GM10248 (cell line): ENCODE measurements at regions of chr7 and their contacts with region 1.

Region 1: DNA sequence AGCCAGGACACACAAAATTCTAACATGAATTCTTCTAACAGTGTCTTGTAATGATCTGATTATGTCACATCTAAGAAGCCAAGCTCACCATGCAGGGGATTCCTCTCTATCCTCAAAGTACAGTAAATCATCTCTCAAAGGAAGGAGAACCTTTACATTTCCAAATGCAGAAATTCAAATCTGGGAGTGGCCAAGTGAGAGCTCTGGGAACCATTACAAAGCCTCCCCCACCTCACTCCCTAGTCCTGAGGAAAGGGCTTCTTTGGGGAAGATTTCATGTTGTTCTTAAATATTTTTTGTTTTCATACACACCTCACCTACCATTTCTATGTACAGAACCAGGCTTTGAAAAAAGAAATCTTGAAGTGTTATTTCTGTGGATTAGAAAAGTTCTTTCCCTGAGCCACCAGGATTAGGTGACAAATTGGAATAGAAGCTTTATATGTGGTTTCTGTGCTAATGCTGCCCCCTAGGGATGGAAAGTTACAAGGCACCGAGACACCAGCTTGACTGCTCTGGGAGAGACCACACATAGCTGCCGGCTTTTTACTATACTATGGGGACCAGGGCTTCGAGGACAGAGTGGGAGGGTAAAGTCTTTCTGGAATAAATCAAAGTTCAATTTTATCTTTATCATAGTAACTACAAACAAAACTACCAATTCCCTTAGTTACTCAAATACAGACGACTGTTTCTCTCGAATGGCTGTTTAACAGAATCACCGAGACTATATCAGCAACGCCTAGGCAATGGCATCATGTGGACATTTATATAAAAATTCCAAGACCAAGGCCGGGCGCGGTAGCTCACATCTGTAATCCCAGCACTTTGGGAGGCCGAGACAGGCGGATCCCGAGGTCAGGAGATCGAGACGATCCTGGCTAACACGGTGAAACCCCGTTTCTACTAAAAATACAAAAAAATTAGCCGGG is 116.1 kb downstream of the RNF216 start:
- DNase-seq: peak; percentile 73
- CTCF ChIP-seq: peak; percentile 73

Region 2: GRCh38 chr7:5557920-5558401 is 107.4 kb before region 1 on chr7:
- CTCF ChIA-PET with region 1: interaction called, 46 read pairs
- POLR2A ChIA-PET with region 1: no interaction called
- DNase-seq: peak; percentile 75
- CTCF ChIP-seq: no peak

Region 3: GRCh38 chr7:5596046-5596895 is 69.1 kb before region 1 on chr7:
- CTCF ChIA-PET with region 1: no interaction called
- POLR2A ChIA-PET with region 1: no interaction called
- DNase-seq: peak; percentile 80
- CTCF ChIP-seq: no peak

Region 4: DNA sequence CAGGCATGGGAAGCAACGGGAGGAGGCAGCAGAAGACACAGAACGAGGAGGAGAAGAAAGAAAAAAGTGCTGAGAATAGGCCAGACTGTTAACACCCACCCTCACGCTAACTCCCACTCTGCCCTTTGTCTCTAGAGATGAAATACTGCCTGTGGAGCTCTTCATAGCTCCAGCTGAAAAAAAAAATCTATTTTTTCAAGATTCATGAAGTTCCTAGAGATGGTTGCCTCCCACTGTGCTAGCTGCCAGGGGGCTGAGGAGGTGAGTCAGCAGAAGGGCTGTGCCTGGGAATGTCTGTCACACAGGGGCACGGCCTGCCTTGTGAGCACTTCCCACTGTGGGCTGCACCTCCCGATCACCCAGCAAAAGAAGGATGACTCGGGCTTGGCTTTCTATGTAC is 28.4 kb before region 1 on chr7:
- CTCF ChIA-PET with region 1: interaction called, 13 read pairs
- POLR2A ChIA-PET with region 1: no interaction called
- DNase-seq: no peak
- CTCF ChIP-seq: no peak

Region 5: GRCh38 chr7:5653661-5654060 is 11.7 kb before region 1 on chr7:
- CTCF ChIA-PET with region 1: interaction called, 38 read pairs
- POLR2A ChIA-PET with region 1: interaction called, 3 read pairs
- DNase-seq: no peak
- CTCF ChIP-seq: no peak

Region 6: DNA sequence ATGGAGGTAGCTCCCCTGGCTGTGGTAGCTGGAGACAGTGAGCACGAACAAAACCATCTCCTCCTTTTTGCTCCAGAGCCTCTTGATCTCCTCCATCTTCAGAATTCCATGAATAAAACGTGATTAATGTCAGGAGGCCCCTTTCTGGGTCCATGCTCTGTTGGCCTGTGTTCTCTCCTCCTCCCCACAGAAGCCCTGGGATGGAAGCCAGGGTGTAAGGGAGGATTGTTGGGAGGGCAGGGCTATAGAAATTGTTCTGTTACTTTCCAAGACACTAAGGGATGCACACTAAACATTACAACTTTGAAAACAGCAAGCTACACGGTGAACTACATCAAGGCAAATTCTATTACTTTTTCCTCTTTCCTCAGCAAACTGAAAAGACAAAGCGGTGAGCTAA is 19.8 kb after region 1 on chr7:
- CTCF ChIA-PET with region 1: interaction called, 152 read pairs
- POLR2A ChIA-PET with region 1: no interaction called
- DNase-seq: no peak
- CTCF ChIP-seq: no peak

Region 7: GRCh38 chr7:5704534-5704922 is 39.2 kb after region 1 on chr7:
- CTCF ChIA-PET with region 1: interaction called, 47 read pairs
- POLR2A ChIA-PET with region 1: no interaction called
- DNase-seq: peak; percentile 67
- CTCF ChIP-seq: peak; percentile 88